Lower leg skin (tissue), 4 donors: ENCODE measurements at regions of chr4 and their contacts with region 1.

Region 1: DNA sequence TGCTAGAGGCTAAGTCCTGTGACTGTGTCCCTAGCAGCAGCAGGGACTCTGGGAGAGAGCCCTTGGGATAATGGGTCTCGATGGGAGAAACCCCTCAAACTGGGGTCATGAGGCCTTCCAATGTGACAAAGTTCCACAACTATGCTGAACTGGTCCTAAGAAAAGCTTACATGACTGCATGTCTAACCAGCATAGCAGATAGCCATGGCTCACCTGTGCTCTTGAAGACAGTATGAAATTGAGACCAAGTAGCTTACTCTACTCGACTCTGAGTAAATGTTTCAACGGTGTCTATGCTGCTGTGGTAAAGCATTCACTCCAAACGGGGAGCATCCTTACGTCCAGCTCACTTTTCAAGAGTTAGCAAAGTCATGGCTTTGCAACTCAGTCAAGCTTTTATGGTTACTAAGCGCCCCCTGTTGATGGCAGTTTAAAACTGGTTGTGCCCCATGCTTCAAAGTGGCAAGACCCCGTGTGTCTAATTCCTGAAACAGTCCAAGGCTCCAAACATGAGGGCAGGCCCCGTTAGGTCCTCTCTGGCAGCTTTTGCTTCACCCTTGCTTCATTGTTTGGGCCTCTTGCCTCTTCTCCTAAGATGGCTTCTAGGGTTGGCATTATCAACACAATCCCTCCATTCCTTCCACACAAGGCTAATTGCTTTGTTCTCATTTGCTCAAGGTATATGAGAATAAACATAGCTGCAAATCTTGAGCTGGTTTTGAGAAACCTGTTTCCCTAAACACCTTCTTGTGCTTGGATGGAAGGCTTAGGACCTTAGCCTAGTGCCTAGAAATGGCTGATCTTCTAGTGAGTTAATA is 46.6 kb downstream of the CCNG2 start:
- DNase-seq: peak; percentile 61 to 88
- H3K4me3 ChIP-seq: no peak overlapping the region
- CTCF ChIP-seq: no peak
- POLR2A ChIP-seq: no peak

Region 2: GRCh38 chr4:76511947-76512346 is 691.6 kb before region 1 on chr4:
- intact Hi-C with region 1: loop called (anchors 5 kb)
- DNase-seq: no peak
- H3K4me3 ChIP-seq: no peak overlapping the region
- CTCF ChIP-seq: no peak
- POLR2A ChIP-seq: no peak

Region 3: GRCh38 chr4:77095101-77095821 is 108.3 kb before region 1 on chr4:
- intact Hi-C with region 1: loop called (anchors 10 kb)
- DNase-seq: peak; percentile 79 to 96
- H3K4me3 ChIP-seq: no peak overlapping the region
- CTCF ChIP-seq: peak in 1 of 3 donors; percentile 50
- POLR2A ChIP-seq: no peak

Region 4: GRCh38 chr4:77172336-77172735 is 31.3 kb before region 1 on chr4:
- intact Hi-C with region 1: no loop called
- DNase-seq: no peak
- H3K4me3 ChIP-seq: no peak overlapping the region
- CTCF ChIP-seq: no peak
- POLR2A ChIP-seq: no peak